T-cell (primary cell): ENCODE measurements at regions of chr12 and their contacts with region 1.

Region 1: GRCh38 chr12:53267999-53268647 is at the start of gene ESPL1:
- DNase-seq: peak; percentile 68 to 89 (median 76)
- ATAC-seq: peak; percentile 91 to 96 (median 94)
- H3K4me3 ChIP-seq: peak within 1 kb of the TSS; percentile 81 to 92
- H3K4me3 Mint-ChIP-seq: peak within 1 kb of the TSS; percentile 89 to 98 (median 92)
- H3K27ac ChIP-seq: peak within 1 kb of the TSS; percentile 71
- H3K27ac Mint-ChIP-seq: peak within 1 kb of the TSS; percentile 75 to 91
- H3K4me1 ChIP-seq: peaks cover 0 to 16% of the 10 kb centered on the region in 2 experiments
- H3K4me1 Mint-ChIP-seq: peaks cover 20 to 22% (median 21%) of the 10 kb centered on the region in 3 donors
- H3K27me3 ChIP-seq: no peaks in the 10 kb centered on the region
- H3K27me3 Mint-ChIP-seq: peaks cover 0 to 3% of the 10 kb centered on the region in 2 donors
- total RNA-seq, gene ESPL1: 1.2 to 2.5 (median 1.6) TPM

Region 2: GRCh38 chr12:52634266-52635056 is 633.7 kb before region 1 on chr12:
- CTCF ChIA-PET with region 1: no interaction called
- POLR2A ChIA-PET with region 1: no interaction called
- DNase-seq: peak in 2 of 35 experiments; percentile 3 to 9
- ATAC-seq: no peak
- H3K4me3 ChIP-seq: no peak overlapping the region
- H3K4me3 Mint-ChIP-seq: peak overlapping the region in 1 of 3 donors; percentile 40
- H3K27ac ChIP-seq: no peak overlapping the region
- H3K27ac Mint-ChIP-seq: peak overlapping the region; percentile 62 to 91
- H3K4me1 ChIP-seq: peaks cover 48 to 55% of the 10 kb centered on the region in 2 experiments
- H3K4me1 Mint-ChIP-seq: peaks cover 52 to 65% (median 60%) of the 10 kb centered on the region in 3 donors
- H3K27me3 ChIP-seq: peaks cover 0 to 3% of the 10 kb centered on the region in 2 experiments
- H3K27me3 Mint-ChIP-seq: peaks cover 0 to 6% of the 10 kb centered on the region in 2 donors

Region 3: GRCh38 chr12:53004582-53004981 is 263.5 kb before region 1 on chr12:
- CTCF ChIA-PET with region 1: no interaction called
- POLR2A ChIA-PET with region 1: no interaction called
- DNase-seq: no peak
- ATAC-seq: no peak
- H3K4me3 ChIP-seq: no peak overlapping the region
- H3K4me3 Mint-ChIP-seq: peak overlapping the region in 1 of 3 donors; percentile 10
- H3K27ac ChIP-seq: no peak overlapping the region
- H3K27ac Mint-ChIP-seq: no peak overlapping the region
- H3K4me1 ChIP-seq: peaks cover 24 to 35% of the 10 kb centered on the region in 2 experiments
- H3K4me1 Mint-ChIP-seq: peaks cover 33 to 41% (median 33%) of the 10 kb centered on the region in 3 donors
- H3K27me3 ChIP-seq: peaks cover 2 to 10% of the 10 kb centered on the region in 2 experiments
- H3K27me3 Mint-ChIP-seq: peaks cover 0 to 11% of the 10 kb centered on the region in 2 donors

Region 4: DNA sequence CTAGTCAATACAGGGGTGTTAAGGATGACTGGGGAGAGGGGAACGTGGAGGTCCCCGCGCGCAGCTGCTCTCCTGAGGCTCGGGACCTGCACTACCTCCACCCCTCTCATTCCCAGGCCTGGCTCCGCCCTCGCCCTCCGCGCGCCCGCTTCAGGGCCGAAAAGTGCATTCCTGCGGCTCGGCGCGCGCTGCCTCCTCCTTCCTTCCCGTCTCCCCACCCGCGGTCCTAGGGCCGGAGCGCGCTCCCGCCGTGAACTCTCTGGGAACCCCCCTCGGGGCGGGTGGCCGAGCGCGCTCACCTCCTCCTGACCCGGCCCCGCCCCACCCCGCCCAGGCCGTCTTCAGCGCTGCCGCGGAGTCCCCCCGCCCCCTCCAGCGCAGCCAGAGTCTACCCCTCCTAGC is 47.3 kb before region 1 on chr12:
- CTCF ChIA-PET with region 1: interaction called, 17 to 34 read pairs
- POLR2A ChIA-PET with region 1: interaction called in 1 of 2 experiments, 3 read pairs
- DNase-seq: peak in 33 of 35 experiments; percentile 50 to 90 (median 66)
- ATAC-seq: peak; percentile 61 to 69 (median 62)
- H3K4me3 ChIP-seq: peak overlapping the region; percentile 58 to 82
- H3K4me3 Mint-ChIP-seq: peak overlapping the region; percentile 95 to 98 (median 96)
- H3K27ac ChIP-seq: peak overlapping the region; percentile 98
- H3K27ac Mint-ChIP-seq: peak overlapping the region; percentile 91 to 97
- H3K4me1 ChIP-seq: peaks cover 49 to 91% of the 10 kb centered on the region in 2 experiments
- H3K4me1 Mint-ChIP-seq: peaks cover 72 to 85% (median 75%) of the 10 kb centered on the region in 3 donors
- H3K27me3 ChIP-seq: no peaks in the 10 kb centered on the region
- H3K27me3 Mint-ChIP-seq: no peaks in the 10 kb centered on the region

Region 5: DNA sequence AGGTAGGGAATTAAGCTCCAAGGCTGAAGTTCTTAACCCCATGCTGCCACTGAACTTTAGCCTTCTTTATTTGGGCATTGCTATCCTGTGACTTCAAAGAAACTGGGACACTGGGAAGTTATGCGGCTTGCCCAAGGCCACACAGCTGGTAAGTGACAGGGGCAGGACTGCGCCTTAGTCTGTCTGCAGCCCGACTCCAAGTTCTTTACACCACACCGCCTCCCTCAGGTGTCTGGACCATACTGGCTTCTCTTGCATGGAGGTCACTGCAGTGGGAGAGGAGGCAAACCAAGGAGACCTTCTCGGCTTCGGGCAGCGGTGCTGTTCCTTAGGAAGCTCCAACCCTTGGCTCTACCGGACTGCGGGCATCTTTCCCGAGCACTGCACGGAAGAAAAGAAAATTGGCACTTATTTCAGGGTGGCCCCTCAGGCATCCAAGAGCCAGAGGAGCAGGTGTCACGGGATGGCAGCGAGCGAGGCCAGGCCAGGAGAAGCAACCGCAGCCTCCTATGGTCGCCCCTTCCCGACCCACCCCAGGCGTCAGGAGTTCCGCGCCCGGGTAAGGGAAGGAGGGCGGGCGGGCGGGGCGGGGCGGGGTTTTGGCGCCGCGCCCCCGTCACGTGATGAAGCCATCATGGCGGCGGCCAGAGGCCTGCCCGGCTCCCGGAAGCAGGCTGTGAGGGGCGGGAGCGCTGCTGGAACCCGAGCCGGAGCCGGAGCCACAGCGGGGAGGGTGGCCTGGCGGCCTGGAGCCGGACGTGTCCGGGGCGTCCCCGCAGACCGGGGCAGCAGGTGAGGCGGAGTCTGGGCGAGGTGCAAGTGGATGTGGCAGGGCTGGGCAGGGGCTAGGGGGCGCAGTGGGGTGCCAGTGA is 16.4 kb before region 1 on chr12:
- CTCF ChIA-PET with region 1: interaction called in 1 of 2 experiments, 15 read pairs
- POLR2A ChIA-PET with region 1: interaction called in 1 of 2 experiments, 5 read pairs
- DNase-seq: peak; percentile 32 to 82 (median 60)
- ATAC-seq: peak; percentile 86 to 91 (median 88)
- H3K4me3 ChIP-seq: peak overlapping the region; percentile 63 to 76
- H3K4me3 Mint-ChIP-seq: peak overlapping the region; percentile 85 to 99 (median 96)
- H3K27ac ChIP-seq: peak overlapping the region; percentile 62
- H3K27ac Mint-ChIP-seq: peak overlapping the region; percentile 96 to 97
- H3K4me1 ChIP-seq: peaks cover 26 to 51% of the 10 kb centered on the region in 2 experiments
- H3K4me1 Mint-ChIP-seq: peaks cover 38 to 53% (median 46%) of the 10 kb centered on the region in 3 donors
- H3K27me3 ChIP-seq: no peaks in the 10 kb centered on the region
- H3K27me3 Mint-ChIP-seq: no peaks in the 10 kb centered on the region

Region 6: DNA sequence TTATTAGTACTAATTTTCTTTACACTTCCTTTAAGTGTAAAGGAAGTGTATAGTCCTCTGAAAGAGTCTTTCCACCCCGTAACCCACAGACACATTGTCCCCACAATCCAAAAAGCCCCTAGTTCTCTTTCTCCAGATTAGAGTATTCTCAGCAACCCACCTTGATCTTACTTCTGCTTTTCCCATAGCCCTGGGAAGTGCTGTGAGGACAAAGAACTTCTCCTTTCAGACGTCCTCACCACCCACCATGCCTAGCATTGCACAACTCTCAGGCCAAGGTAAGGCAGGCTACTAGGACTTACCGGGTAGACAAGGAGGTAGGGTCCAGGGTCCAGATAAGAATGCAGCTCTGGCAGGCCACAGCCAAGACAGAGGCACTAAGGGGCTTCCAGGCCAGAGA is 45.9 kb after region 1 on chr12:
- CTCF ChIA-PET with region 1: no interaction called
- POLR2A ChIA-PET with region 1: no interaction called
- DNase-seq: no peak
- ATAC-seq: no peak
- H3K4me3 ChIP-seq: no peak overlapping the region
- H3K4me3 Mint-ChIP-seq: no peak overlapping the region
- H3K27ac ChIP-seq: no peak overlapping the region
- H3K27ac Mint-ChIP-seq: no peak overlapping the region
- H3K4me1 ChIP-seq: no peaks in the 10 kb centered on the region
- H3K4me1 Mint-ChIP-seq: peaks cover 5 to 13% (median 8%) of the 10 kb centered on the region in 3 donors
- H3K27me3 ChIP-seq: no peaks in the 10 kb centered on the region
- H3K27me3 Mint-ChIP-seq: no peaks in the 10 kb centered on the region

Region 7: GRCh38 chr12:53561590-53561953 is 293.4 kb after region 1 on chr12:
- CTCF ChIA-PET with region 1: no interaction called
- POLR2A ChIA-PET with region 1: no interaction called
- DNase-seq: no peak
- ATAC-seq: peak in 3 of 4 experiments; percentile 54 to 75 (median 62)
- H3K4me3 ChIP-seq: no peak overlapping the region
- H3K4me3 Mint-ChIP-seq: no peak overlapping the region
- H3K27ac ChIP-seq: no peak overlapping the region
- H3K27ac Mint-ChIP-seq: peak overlapping the region; percentile 31 to 32
- H3K4me1 ChIP-seq: peaks cover 16 to 23% of the 10 kb centered on the region in 2 experiments
- H3K4me1 Mint-ChIP-seq: peaks cover 45 to 52% (median 52%) of the 10 kb centered on the region in 3 donors
- H3K27me3 ChIP-seq: no peaks in the 10 kb centered on the region
- H3K27me3 Mint-ChIP-seq: no peaks in the 10 kb centered on the region